ENCODE measurements at regions of chr19 and their contacts with region 1.

Region 1: GRCh38 chr19:16062789-16063188 is 13.5 kb upstream of the TPM4 start:
- DNase-seq: peak; percentile 75
- H3K4me3 Mint-ChIP-seq: no peak overlapping the region
- H3K27ac Mint-ChIP-seq: no peak overlapping the region
- H3K4me1 Mint-ChIP-seq: peaks cover 25% of the 10 kb centered on the region
- H3K27me3 Mint-ChIP-seq: peaks cover 4% of the 10 kb centered on the region

Region 2: DNA sequence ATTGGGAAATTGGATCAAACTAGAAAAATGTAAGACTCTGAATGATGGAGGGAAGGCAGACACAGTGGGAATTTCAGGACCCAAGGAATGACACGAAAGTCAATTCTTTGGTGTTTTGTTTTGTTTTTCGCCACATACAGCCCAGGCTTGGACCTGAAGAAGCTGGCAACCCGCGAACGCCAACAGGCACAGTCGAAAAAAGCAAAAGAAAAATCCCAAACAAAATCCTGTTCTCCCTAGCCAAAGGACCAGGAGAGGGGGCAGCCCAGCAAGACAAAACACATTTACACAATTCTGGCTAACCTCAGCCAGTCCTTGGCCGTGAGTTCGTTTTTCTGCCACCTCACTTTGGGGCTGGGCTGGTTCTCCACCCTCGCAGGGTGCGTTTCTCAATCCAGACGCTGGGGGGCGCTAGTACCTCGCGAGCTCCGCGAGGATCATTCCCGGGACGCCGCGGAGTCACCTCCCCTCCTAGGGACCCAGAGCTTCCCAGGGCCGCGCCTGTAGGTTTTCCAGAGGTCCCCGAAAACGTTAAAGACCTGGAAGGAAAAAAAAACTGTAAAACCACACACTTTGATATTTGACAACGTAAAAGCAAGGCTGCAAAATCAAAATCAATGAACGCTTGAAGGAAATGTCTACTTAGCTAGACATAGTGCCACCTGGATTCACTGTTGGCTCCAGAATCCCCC is 21.3 kb before region 1 on chr19:
- CTCF ChIA-PET with region 1: interaction called, 14 read pairs
- POLR2A ChIA-PET with region 1: no interaction called
- DNase-seq: peak; percentile 78
- H3K4me3 Mint-ChIP-seq: no peak overlapping the region
- H3K27ac Mint-ChIP-seq: no peak overlapping the region
- H3K4me1 Mint-ChIP-seq: peaks cover 19% of the 10 kb centered on the region
- H3K27me3 Mint-ChIP-seq: peaks cover 5% of the 10 kb centered on the region

Measured in activated CD4-positive, alpha-beta memory T cell treated with anti-CD3 and anti-CD28 coated beads, Interleukin-2, amount 10 ng/mL, durations not matched to agents 7 days and 5 days (primary cell).